Endothelial cell of umbilical vein (primary cell): ENCODE measurements at regions of chr3 and their contacts with region 1.

Region 1: GRCh38 chr3:11335056-11335608 is 62.9 kb downstream of the ATG7 start:
- DNase-seq: peak; percentile 81
- H3K4me3 ChIP-seq: no peak overlapping the region
- H3K27ac ChIP-seq: no peak overlapping the region
- H3K4me1 ChIP-seq: peaks cover 15% of the 10 kb centered on the region
- H3K27me3 ChIP-seq: no peaks in the 10 kb centered on the region
- CTCF ChIP-seq: peak; percentile 41 to 56
- POLR2A ChIP-seq: no peak

Region 2: DNA sequence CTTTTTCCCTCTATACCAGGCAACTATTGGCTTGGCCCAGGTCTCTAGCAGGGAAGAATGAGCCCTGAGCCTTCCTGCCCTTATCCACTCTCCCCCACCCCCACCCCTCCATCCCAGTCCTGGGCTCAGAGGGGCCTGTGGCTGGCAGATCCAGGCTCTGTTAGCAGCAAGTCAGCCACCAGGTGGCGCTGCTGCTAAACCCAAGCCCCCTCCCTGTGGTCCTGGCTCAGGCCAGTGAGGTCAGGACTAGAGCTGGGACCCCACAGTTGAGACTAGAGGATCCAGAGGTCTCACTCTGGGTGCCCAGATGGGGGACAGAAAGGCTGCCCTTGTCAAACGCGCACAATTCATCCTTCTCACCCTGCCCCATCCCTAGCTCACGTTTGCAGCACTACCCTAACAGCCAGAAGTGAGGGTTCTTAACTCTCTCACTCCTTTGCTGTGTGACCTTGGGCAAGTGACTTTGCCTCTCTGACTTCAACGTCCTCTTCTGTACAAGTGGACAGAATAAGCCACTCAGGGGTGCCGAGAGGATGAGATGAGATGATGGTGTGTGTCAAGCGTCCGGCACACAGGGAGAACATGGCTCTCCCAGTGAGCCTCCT is 389.3 kb before region 1 on chr3:
- CTCF ChIA-PET with region 1: interaction called, 8 read pairs
- POLR2A ChIA-PET with region 1: no interaction called
- dilution Hi-C with region 1: no loop called
- intact Hi-C with region 1: loop called (anchors 1 kb)
- DNase-seq: peak; percentile 43
- H3K4me3 ChIP-seq: no peak overlapping the region
- H3K27ac ChIP-seq: no peak overlapping the region
- H3K4me1 ChIP-seq: no peaks in the 10 kb centered on the region
- H3K27me3 ChIP-seq: no peaks in the 10 kb centered on the region
- CTCF ChIP-seq: peak; percentile 71 to 91
- POLR2A ChIP-seq: no peak

Region 3: DNA sequence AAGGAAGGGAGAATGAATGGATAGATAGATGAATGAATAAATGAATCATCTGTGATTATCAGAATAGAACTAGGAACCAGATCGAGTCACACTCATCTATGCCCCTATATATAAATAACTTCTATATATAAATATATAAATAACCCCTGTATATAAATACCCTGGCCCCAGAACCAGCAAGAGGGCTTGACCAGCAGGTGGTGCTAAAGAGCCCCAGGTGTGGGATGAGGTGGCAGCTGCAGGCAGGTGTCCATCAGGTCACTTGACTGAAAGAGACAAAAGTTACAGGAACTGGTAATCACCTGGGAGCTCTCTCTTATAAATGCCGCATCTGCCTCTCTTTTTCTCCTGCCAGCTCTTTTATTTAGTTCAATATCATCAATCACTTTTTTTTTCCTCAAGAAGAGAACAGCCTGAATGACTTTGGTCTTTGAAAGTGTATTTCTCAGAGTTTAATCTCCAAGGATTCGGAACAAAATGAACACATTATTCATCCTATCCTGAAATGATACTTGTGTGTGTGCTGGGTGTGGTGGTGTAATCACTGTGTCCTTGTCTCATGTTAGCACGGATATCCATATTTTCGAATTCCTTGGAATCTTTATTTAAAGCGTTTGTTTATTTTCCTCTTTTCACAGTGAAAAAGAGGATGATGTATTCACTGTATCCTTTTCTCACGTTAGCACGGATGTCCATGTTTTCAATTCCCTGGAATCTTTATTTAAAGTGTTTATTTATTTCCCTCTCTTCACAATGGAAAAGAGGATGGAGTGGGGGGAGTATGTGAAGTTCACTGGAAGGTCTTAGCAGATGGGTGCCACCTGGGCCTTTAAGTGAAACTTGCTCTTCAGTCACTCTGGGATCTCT is 98.3 kb before region 1 on chr3:
- CTCF ChIA-PET with region 1: interaction called, 36 read pairs
- POLR2A ChIA-PET with region 1: no interaction called
- dilution Hi-C with region 1: no loop called
- intact Hi-C with region 1: loop called (anchors 1 kb)
- DNase-seq: peak; percentile 61
- H3K4me3 ChIP-seq: no peak overlapping the region
- H3K27ac ChIP-seq: peak overlapping the region; percentile 40
- H3K4me1 ChIP-seq: peaks cover 23% of the 10 kb centered on the region
- H3K27me3 ChIP-seq: no peaks in the 10 kb centered on the region
- CTCF ChIP-seq: peak; percentile 75 to 78
- POLR2A ChIP-seq: no peak

Region 4: GRCh38 chr3:11282250-11283138 is 52.6 kb before region 1 on chr3:
- CTCF ChIA-PET with region 1: interaction called, 14 read pairs
- POLR2A ChIA-PET with region 1: no interaction called
- dilution Hi-C with region 1: no loop called
- intact Hi-C with region 1: no loop called
- DNase-seq: no peak
- H3K4me3 ChIP-seq: no peak overlapping the region
- H3K27ac ChIP-seq: no peak overlapping the region
- H3K4me1 ChIP-seq: peaks cover 18% of the 10 kb centered on the region
- H3K27me3 ChIP-seq: no peaks in the 10 kb centered on the region
- CTCF ChIP-seq: no peak
- POLR2A ChIP-seq: no peak

Region 5: GRCh38 chr3:11346416-11346815 is 11.3 kb after region 1 on chr3:
- CTCF ChIA-PET with region 1: interaction called, 14 read pairs
- POLR2A ChIA-PET with region 1: no interaction called
- dilution Hi-C with region 1: no loop called
- intact Hi-C with region 1: no loop called
- DNase-seq: no peak
- H3K4me3 ChIP-seq: no peak overlapping the region
- H3K27ac ChIP-seq: no peak overlapping the region
- H3K4me1 ChIP-seq: no peaks in the 10 kb centered on the region
- H3K27me3 ChIP-seq: no peaks in the 10 kb centered on the region
- CTCF ChIP-seq: no peak
- POLR2A ChIP-seq: no peak